ENCODE measurements at regions of chr10 and their contacts with region 1.

Region 1: GRCh38 chr10:123132576-123133477 is 2.9 kb upstream of the HMX3 start:
- DNase-seq: peak; percentile 88 to 90
- ATAC-seq: peak; percentile 72 to 88
- H3K4me3 ChIP-seq: peak overlapping the region; percentile 38
- H3K27ac ChIP-seq: no peak overlapping the region
- H3K4me1 ChIP-seq: peaks cover 25% of the 10 kb centered on the region; the same call in 2 of the 3 replicates
- CTCF ChIP-seq: peak; percentile 88
- EP300 ChIP-seq: no peak
- POLR2A ChIP-seq: no peak
- RAD21 ChIP-seq: peak; percentile 90 to 93

Region 2: GRCh38 chr10:123147635-123148413 is 15.0 kb after region 1 on chr10 and contains the start of gene HMX2:
- CTCF ChIA-PET with region 1: interaction called, 64 read pairs
- POLR2A ChIA-PET with region 1: no interaction called
- DNase-seq: no peak
- ATAC-seq: peak; percentile 62 to 84; a peak in 4 of 6 replicates
- H3K4me3 ChIP-seq: peak within 1 kb of the TSS; percentile 46
- H3K27ac ChIP-seq: peak within 1 kb of the TSS in 1 of 2 experiments; percentile 78; a peak in 3 of 6 replicates
- H3K4me1 ChIP-seq: peaks cover 4% of the 10 kb centered on the region; the same call in 2 of the 3 replicates
- CTCF ChIP-seq: no peak
- EP300 ChIP-seq: no peak
- POLR2A ChIP-seq: no peak
- RAD21 ChIP-seq: no peak
- polyA plus RNA-seq, gene HMX2: not detected in 2 replicates

Region 3: DNA sequence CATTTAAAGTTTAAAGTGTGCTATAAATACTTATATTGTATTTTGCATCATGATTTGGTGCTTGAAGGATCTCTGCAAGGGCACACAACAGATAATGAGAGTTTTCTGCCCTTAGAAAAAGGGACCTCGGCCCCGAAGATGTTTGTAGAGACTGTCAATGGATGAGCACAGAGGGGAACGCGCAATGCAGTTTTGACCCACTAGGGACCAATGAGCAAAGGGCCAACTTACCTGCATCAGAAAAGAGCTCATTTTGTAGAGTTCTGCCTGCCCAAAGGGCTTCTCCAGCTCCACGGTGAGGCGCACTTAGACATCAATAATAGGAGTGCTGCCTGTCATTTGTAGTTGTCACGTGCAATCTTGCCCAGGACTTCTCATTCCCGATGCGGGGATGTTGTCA is 112.4 kb after region 1 on chr10:
- CTCF ChIA-PET with region 1: no interaction called
- POLR2A ChIA-PET with region 1: no interaction called
- DNase-seq: no peak
- ATAC-seq: peak in 1 of 2 experiments; percentile 48; a peak in 2 of 6 replicates
- H3K4me3 ChIP-seq: no peak overlapping the region
- H3K27ac ChIP-seq: no peak overlapping the region
- H3K4me1 ChIP-seq: no peaks in the 10 kb centered on the region
- CTCF ChIP-seq: no peak
- EP300 ChIP-seq: no peak
- POLR2A ChIP-seq: no peak
- RAD21 ChIP-seq: no peak

Region 4: DNA sequence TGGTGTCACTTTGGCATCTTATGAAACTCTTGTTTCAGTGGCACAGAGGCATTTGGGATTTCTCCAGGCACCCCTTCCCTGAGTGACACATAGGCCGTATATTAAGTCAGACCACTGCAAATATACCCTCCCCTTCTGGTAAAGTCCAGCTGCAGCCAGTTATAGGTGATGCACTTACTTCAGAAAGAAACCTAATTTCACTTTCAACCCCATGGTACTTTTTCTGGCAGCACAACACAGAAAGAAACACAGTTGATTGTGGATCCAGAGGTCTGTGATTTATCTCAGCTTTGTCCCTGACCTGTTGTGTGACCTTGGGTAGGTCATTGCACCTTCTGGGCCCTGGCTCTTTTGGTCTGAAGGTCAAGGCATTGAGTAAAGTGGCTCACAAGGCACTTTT is 194.6 kb after region 1 on chr10:
- CTCF ChIA-PET with region 1: no interaction called
- POLR2A ChIA-PET with region 1: no interaction called
- DNase-seq: no peak
- ATAC-seq: no peak
- H3K4me3 ChIP-seq: no peak overlapping the region
- H3K27ac ChIP-seq: no peak overlapping the region
- H3K4me1 ChIP-seq: 0 out of 3 replicates have a peak, but pooled peaks cover 3% of the 10 kb centered on the region
- CTCF ChIP-seq: no peak
- EP300 ChIP-seq: no peak
- POLR2A ChIP-seq: no peak
- RAD21 ChIP-seq: no peak

Region 5: GRCh38 chr10:123559066-123559822 is 426.4 kb after region 1 on chr10:
- CTCF ChIA-PET with region 1: interaction called, 76 read pairs
- POLR2A ChIA-PET with region 1: no interaction called
- DNase-seq: peak; percentile 60 to 88
- ATAC-seq: peak; percentile 87 to 96
- H3K4me3 ChIP-seq: no peak overlapping the region
- H3K27ac ChIP-seq: no peak overlapping the region
- H3K4me1 ChIP-seq: no peaks in the 10 kb centered on the region
- CTCF ChIP-seq: peak; percentile 86
- EP300 ChIP-seq: no peak
- POLR2A ChIP-seq: no peak
- RAD21 ChIP-seq: peak; percentile 95 to 96